AG04449 (cell line): ENCODE measurements at regions of chr1 and their contacts with region 1.

Region 1: DNA sequence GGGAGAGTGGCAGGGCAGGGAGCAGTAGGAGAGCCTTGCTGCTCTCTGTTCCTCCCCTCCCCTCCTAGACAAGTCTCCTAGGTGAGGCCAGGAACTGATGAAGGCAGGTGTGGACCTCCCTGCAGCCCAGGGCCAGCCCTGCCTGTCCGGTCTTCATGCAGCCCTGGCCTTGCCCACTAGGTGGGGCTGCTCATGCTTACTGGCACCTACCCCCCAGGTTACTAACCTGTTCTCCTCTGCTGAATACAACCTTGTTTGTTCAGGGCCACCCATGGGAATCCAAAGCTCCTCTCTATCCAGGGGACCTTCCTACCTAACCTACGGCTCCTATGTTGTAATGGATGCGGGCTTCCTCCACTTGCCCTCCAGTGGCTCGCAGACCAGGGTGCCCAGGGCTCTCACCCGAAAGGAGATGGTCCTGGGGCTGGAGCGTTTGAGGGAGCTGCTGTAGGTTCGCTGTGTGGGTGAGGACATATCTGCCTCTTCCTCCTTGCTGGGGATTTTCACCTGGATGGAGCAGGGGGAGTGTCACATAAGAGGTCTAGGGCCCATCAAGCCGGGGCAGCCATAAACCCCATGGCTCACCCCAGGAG is 7.9 kb upstream of the TNNT2 start:
- DNase-seq: no peak
- H3K4me3 ChIP-seq: no peak overlapping the region
- CTCF ChIP-seq: peak; percentile 86

Region 2: GRCh38 chr1:201268604-201269151 is 116.7 kb before region 1 on chr1:
- CTCF ChIA-PET with region 1: interaction called, 20 read pairs
- POLR2A ChIA-PET with region 1: no interaction called
- DNase-seq: peak; percentile 38
- H3K4me3 ChIP-seq: no peak overlapping the region
- CTCF ChIP-seq: no peak

Region 3: GRCh38 chr1:201370500-201370899 is 14.9 kb before region 1 on chr1:
- CTCF ChIA-PET with region 1: interaction called, 41 read pairs
- POLR2A ChIA-PET with region 1: no interaction called
- DNase-seq: no peak
- H3K4me3 ChIP-seq: no peak overlapping the region
- CTCF ChIP-seq: no peak

Region 4: DNA sequence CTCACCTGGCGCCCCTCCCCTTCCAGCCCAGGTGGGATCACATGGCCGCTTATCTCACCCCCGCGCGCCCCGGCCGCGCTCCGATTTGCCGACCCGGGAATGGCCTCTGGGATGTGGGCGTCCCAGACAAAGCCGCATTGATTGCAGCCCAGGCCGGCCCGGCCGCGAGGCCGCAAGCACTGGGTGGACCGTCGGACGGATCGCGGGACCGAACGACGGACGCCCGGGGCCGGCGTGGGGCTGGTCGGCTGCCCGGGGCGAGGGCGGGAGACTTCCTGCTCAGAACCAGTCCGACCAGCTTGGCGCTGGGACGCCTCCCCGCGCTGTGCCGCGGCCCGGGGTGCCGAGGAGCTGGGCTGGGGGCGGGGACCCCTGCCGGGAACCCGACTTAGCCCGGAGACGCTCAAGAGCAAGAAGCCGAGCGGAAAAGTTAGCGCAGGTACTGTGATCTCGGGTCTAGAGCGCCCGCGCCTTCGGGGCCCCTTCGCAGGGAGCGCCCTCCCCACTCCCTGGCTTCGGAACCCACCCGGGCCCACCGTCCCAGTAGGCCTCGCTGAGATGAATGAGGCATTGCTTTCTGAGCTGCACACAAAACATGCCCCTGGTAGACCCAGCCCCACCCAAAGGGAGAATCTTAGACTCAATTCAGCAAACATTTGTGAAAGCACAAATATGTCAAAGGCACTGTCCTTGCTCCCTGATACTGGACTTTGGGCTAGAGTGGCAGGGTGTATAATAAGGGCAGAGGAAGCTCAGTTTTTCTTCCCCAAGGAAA is 14.1 kb after region 1 on chr1:
- CTCF ChIA-PET with region 1: interaction called, 71 read pairs
- POLR2A ChIA-PET with region 1: no interaction called
- DNase-seq: no peak
- H3K4me3 ChIP-seq: no peak overlapping the region
- CTCF ChIP-seq: no peak

Region 5: DNA sequence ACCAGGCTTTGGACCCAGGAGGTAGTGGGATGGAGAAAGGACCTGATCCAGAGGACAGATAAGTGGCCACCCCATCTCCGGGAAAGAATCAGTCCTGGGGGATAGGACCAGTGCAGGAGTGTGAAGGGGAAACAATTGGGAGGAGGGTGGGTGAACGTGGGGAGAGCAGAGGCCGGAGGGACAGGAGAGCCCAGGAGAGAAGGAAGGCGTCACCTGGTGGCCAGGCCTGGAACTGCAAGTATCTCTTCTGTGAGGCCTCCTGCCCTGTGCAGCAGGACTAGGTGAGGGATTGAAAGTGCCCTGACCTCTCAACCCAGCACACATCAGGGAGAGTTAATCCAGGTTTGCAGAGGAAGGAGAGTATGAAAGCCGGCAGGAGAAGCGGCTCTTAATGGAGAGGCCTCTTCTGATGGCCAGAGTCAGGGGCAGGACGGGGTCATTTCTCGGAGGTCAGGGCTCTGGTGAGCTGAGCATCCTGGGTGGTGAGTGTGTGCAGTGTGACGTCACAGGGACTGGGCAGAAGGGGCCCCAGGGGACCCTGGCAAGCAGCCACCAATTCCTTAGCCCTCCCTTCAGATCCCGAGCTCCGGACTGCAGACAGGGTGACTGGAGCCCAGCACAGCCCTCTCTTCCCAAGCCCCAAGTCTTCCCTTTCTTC is 22.9 kb after region 1 on chr1:
- CTCF ChIA-PET with region 1: interaction called, 104 read pairs
- POLR2A ChIA-PET with region 1: interaction called, 5 read pairs
- DNase-seq: peak; percentile 10
- H3K4me3 ChIP-seq: no peak overlapping the region
- CTCF ChIP-seq: peak; percentile 99

Region 6: DNA sequence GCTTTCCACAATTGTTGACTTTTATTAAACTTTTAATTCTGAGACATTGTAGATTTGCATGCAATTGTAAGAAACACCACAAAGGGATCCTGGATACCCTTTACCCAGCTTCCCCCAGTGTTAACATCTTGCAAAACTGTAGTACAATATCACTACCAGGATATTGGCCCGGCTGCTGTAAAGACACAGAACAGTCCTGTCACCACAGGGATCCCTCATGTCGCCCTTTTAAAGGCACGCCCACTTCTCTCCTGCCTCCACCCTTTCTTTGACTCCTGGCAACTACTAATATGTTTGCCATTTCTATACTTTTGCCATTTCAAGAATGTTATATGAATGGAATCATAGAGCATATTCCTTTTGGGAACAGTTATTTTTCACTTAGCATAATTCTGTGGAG is 190.5 kb after region 1 on chr1:
- CTCF ChIA-PET with region 1: no interaction called
- POLR2A ChIA-PET with region 1: no interaction called
- DNase-seq: no peak
- H3K4me3 ChIP-seq: no peak overlapping the region
- CTCF ChIP-seq: no peak

Region 7: GRCh38 chr1:201818971-201819750 is 433.8 kb after region 1 on chr1:
- CTCF ChIA-PET with region 1: no interaction called
- POLR2A ChIA-PET with region 1: no interaction called
- DNase-seq: no peak
- H3K4me3 ChIP-seq: no peak overlapping the region
- CTCF ChIP-seq: no peak